ENCODE measurements at regions of chr1 and their contacts with region 1.

Region 1: DNA sequence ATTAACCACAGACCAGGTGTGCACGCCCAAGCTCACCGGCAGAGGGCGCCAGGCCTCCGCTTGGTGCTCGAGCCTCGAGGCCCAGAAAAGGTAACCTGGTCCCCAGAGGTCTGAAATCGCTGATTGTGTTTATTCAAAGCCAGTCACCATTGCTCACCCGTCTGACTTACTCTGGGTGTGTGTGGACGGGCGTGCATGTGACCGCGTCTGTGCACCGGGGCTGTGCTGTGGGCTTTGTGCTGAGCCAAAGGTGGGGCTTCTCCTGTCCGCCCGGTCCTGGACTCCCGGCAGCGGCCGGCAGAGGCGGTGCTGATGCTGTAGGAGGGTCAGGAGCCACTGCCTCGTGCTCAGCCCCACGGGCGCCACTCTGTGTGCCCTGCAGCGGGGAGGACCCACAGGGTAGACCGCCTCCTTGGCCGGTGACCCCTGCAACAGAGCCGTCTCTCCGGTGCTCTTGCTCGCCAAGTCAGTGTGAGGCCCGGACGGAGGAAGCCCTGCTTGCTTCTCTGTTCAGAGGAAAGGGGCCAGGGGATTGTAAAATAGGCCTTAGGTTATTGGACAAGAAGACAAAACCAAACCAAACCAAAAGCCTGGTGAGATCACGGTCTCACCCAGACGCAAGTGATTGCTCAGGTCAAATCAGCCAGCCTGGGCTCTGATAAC is 32.0 kb upstream of the BTG2 start:
- DNase-seq: peak; percentile 96

Region 2: DNA sequence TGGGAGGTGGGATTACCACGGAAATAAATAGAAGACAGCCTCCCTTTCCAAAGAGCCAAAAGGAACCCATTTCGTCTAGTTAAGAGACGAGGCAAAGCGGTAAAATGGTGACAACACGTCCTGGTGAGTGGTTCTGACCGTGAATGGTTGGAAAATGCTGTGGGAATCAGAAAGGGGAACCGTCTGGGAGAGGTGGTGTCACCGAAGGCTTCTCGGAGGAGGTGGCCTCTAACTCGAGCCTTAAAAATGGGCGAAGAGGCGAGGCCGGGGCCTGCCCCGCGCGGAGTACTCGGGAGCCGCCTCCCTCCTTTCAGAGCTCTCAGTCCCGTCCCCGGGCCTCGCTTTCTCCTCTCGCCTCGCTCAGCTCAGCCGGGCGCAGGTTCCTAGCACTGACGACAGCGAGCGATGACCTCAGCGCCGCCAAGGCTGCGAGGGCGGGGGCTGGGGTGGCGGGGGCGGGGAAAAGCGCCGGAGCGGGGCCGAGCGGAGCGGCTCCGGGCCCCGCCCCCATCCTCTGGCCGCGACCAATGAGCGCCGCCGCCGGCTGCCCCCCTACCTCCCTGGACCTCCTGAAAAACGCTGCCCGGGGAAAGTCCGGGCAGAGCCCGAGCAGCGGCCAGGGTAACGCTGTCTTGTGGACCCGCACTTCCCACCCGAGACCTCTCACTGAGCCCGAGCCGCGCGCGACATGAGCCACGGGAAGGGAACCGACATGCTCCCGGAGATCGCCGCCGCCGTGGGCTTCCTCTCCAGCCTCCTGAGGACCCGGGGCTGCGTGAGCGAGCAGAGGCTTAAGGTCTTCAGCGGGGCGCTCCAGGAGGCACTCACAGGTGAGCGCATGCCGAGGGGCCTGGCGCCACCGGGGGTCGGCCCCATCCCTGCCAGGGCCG is 31.8 kb after region 1 on chr1 and contains the start of gene BTG2:
- intact Hi-C with region 1: loop called in 1 of 2 experiments (anchors 5 kb)
- DNase-seq: peak; percentile 98
- total RNA-seq, gene BTG2: 64.7 to 153 TPM

Region 3: DNA sequence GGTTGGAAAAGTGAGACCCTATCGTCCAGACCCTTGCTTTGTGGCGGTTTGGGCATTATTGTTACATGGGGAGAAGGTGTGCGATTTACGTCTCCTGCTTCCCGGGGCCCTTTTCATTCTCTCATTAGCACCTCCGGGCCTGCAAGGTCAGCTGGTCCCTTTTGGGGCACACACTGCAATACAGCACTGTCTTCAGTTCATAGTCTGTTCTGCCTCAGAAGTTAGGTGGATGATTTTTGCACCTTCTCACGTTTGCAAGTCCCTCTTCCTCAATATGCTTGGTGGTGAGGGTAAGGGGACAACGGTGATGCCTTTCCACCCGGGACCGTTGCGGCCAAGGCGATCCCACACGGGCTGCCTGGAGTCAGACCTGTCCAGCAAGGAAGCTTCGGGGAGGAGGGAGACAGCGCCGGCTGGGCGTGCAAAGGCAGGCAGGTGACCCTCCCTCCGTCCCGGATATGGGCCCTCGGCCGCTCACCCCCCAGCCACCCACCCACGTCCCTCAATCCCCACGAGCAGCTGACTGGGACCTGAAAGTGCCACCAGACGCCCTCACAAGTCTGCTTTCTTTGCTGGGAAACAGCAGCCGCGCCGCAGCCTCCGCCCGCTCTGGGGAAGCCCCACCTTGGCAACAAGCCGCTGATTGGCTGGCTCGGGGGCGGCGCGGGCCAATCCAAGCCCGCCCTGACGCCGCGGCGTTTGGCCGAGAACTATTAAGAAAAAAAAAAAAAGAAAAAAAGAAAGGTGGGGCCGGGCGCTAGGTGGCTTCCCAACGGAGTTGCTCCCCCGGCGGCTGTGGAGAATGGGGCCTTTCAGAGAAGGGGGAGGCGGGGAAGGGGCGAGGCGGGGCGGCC is 53.7 kb after region 1 on chr1:
- intact Hi-C with region 1: loop called in 1 of 2 experiments (anchors 5 kb)
- DNase-seq: peak; percentile 99

Region 4: DNA sequence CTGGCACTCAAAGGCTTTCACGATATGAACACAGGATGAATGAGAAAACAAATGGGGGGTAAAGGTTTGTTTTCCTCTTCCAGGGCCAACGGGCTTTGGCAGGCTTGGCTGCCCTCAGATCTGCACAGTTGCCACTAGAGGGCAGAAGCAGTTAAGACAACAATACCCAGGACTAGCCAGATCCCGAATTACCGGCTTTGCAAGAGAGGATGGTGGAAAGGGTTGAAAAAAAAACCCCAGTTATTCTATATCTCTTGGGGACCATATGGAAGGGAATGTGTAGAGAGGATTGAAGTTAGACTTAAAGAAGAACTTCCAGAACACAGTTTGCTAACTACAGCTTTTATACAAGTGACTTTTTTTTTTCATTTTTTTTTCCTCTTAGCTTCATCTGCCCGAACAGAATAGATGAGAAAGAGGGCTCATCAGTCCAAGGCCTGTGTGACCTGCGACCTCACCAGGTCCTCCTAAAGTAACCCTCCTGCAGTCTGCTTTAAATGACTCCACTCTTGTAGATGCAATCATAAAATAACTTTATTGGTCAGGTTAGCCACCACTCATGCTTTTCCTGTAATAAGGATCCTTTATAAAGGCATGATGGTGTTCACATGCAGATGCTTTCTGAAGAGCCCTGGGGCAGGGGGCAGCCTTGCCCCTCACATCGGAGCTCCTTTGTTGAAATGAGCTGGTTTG is 66.9 kb after region 1 on chr1:
- intact Hi-C with region 1: loop called (anchors 2 kb)
- DNase-seq: no peak

Region 5: DNA sequence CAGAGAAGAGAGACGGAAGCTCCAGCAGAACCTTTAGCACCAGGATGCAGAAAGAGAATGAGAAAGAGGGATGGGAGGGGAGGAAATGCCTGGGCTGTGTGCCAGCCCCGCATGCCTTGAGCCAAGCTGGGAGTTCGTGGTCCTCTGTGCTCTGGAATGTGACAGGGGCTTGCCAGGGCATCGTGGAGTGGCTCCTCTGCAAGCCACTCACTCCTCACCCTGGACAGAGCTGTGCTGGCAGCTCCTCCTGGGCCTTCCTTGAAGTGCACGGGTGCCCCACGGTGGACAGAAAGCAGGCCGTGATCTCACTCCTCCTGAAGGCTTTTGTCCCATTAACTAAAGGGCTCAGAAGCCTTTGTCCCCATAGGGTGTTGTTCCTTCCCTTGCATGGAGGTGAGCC is 167.4 kb after region 1 on chr1:
- intact Hi-C with region 1: loop called in 1 of 2 experiments (anchors 10 kb)
- DNase-seq: peak; percentile 92

Region 6: GRCh38 chr1:203475012-203475981 is 202.0 kb after region 1 on chr1 and contains the start of gene PRELP:
- intact Hi-C with region 1: loop called in 1 of 2 experiments (anchors 10 kb)
- DNase-seq: no peak
- total RNA-seq, gene PRELP: 172 to 283 TPM